Prostate gland (tissue), 2 donors: ENCODE measurements at regions of chr1 and their contacts with region 1.

Region 1: DNA sequence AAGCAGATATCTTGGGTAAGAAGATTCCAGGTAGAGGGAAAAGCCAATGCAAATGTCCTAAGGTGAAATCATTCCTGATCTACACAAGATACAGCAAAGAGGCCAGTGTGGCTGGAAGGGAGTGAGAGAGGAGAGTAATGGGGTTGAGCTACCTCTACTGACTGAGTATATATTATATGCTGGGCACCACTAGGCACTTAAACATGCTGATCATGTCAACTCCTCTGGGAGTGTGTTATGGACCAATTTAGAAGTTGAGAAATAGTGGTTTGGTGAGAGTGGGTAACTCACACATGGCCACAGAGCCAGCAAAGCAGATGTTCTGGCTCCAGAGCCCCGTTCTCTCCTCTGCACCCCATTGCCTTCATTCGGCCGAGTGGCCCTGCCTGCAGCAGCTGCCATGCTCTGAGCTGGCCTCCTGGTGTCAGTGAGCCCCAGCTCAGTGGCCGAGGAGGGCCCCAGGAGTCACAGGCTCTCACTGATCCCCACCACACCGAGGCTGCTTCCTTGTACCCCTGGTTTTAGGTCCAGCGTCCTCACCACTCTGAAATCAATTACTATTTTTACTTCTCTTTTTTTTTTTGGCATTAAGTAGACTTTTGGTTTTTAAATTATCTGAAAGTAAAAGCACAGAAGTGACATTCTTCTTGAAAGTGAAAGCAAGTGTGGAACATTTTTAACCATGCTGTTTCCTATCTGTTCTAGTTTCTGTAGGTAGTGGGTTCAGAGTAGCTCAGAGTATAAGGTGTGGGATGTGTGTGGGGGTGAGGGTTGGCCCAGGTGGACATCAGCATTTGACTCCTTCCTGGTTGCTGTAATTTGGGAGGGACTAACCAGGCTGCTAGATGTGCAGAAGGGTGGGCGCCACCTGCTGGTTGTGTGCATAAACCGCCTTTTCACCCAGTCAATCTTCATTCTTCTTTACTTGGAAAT is 45.8 kb upstream of the CRNN start:
- DNase-seq: peak; percentile 31
- H3K4me3 ChIP-seq: no peak overlapping the region
- H3K27ac ChIP-seq: no peak overlapping the region
- H3K4me1 ChIP-seq: no peaks in the 10 kb centered on the region
- H3K27me3 ChIP-seq: no peaks in the 10 kb centered on the region
- CTCF ChIP-seq: peak in 3 of 4 experiments; percentile 31 to 63 (median 45)
- POLR2A ChIP-seq: no peak

Region 2: GRCh38 chr1:152052606-152053005 is 407.3 kb before region 1 on chr1:
- intact Hi-C with region 1: loop called (anchors 5 kb)
- DNase-seq: peak; percentile 84
- H3K4me3 ChIP-seq: no peak overlapping the region
- H3K27ac ChIP-seq: no peak overlapping the region
- H3K4me1 ChIP-seq: peaks cover 6% of the 10 kb centered on the region
- H3K27me3 ChIP-seq: no peaks in the 10 kb centered on the region
- CTCF ChIP-seq: peak; percentile 84 to 96 (median 90)
- POLR2A ChIP-seq: no peak

Region 3: GRCh38 chr1:152141974-152142584 is 317.8 kb before region 1 on chr1:
- intact Hi-C with region 1: loop called (anchors 5 kb)
- DNase-seq: peak; percentile 75
- H3K4me3 ChIP-seq: no peak overlapping the region
- H3K27ac ChIP-seq: no peak overlapping the region
- H3K4me1 ChIP-seq: no peaks in the 10 kb centered on the region
- H3K27me3 ChIP-seq: no peaks in the 10 kb centered on the region
- CTCF ChIP-seq: peak; percentile 57 to 84 (median 74)
- POLR2A ChIP-seq: no peak

Region 4: GRCh38 chr1:152426731-152427130 is 33.1 kb before region 1 on chr1:
- intact Hi-C with region 1: no loop called
- DNase-seq: no peak
- H3K4me3 ChIP-seq: no peak overlapping the region
- H3K27ac ChIP-seq: no peak overlapping the region
- H3K4me1 ChIP-seq: no peaks in the 10 kb centered on the region
- H3K27me3 ChIP-seq: no peaks in the 10 kb centered on the region
- CTCF ChIP-seq: no peak
- POLR2A ChIP-seq: no peak